T-cell (primary cell): ENCODE measurements at regions of chr4 and their contacts with region 1.

Region 1: DNA sequence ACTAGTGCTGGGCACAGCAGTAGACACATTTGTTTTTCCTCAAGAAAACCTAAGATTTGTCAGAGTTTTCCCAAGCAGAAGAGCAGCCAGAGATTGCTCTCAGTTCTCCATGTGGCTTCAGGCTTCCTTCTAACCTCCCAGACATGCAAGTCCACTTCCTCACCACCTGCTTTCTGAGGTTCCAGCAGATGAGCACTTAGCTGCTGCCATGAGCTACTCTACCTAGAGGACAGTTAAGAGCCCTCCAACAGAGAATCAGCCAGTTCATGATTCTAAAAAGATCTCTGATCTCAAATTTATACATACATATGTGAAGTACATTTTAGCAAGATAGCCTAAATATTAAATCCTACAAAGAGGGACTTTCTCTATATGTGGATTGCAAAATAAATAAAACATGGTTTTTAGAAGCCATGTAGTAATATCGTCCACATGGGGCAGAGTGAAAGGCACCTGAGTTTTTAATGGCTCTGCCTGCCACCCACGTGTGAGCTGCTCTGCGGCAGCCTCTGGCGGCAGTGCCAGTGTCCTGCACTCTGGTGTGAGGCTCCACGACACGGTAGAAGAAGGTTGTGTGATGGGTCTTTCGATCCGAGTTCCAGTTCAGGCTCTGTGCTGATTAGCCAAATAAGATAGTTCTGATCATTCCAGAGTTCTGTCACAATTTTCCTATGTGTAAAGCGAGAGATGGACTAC is 10.3 kb downstream of the CYP4V2 start:
- DNase-seq: peak; percentile 9 to 71 (median 47)
- ATAC-seq: peak; percentile 61 to 96 (median 91)
- H3K4me3 ChIP-seq: no peak overlapping the region
- H3K4me3 Mint-ChIP-seq: peak overlapping the region in 1 of 3 donors; percentile 17
- H3K27ac ChIP-seq: peak overlapping the region; percentile 52
- H3K27ac Mint-ChIP-seq: peak overlapping the region; percentile 70 to 74
- H3K4me1 ChIP-seq: no peaks in the 10 kb centered on the region
- H3K4me1 Mint-ChIP-seq: peaks cover 12 to 32% (median 18%) of the 10 kb centered on the region in 3 donors
- H3K27me3 ChIP-seq: no peaks in the 10 kb centered on the region
- H3K27me3 Mint-ChIP-seq: no peaks in the 10 kb centered on the region

Region 2: DNA sequence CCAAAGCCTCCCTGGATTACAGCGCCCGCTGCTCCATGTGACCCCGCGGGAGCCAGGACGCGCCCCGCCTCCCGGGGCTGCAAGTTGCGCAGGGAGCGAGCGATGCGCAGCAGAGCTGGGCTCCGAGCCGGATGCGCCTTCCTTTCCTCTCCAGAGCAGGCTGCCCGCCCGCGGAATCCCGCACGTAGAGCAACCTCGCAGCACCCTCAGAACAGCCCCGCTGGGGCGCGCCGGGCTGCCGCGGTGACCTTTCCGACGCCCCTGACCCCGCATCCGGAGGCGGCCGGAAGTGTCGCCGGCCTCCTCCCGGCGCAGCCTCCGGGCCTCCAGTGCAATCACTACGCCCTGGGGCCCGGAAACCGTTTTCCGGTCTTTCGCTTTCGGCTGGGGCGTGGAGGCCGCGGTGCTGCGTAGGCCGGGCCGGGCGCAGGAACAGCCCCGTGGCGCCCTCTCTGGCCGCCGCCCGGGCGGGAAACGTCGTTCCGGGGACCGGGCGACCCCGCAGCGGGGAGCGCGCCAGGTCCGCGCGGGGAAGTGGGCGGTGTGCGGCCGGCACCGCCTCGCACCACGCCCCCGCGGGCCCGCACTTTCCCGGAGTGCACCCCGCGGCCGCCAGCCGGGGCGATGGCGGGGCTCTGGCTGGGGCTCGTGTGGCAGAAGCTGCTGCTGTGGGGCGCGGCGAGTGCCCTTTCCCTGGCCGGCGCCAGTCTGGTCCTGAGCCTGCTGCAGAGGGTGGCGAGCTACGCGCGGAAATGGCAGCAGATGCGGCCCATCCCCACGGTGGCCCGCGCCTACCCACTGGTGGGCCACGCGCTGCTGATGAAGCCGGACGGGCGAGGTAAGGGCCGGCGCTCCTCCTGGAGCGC is 10.2 kb before region 1 on chr4 and contains the start of gene CYP4V2:
- CTCF ChIA-PET with region 1: interaction called, 7 to 19 read pairs
- POLR2A ChIA-PET with region 1: interaction called, 3 to 15 read pairs
- DNase-seq: peak; percentile 64 to 88 (median 79)
- ATAC-seq: peak; percentile 85 to 89 (median 86)
- H3K4me3 ChIP-seq: peak within 1 kb of the TSS; percentile 86 to 90
- H3K4me3 Mint-ChIP-seq: peak within 1 kb of the TSS; percentile 87 to 92 (median 89)
- H3K27ac ChIP-seq: peak within 1 kb of the TSS; percentile 94
- H3K27ac Mint-ChIP-seq: peak within 1 kb of the TSS; percentile 95 to 96
- H3K4me1 ChIP-seq: peaks cover 9 to 19% of the 10 kb centered on the region in 2 experiments
- H3K4me1 Mint-ChIP-seq: peaks cover 46 to 57% (median 48%) of the 10 kb centered on the region in 3 donors
- H3K27me3 ChIP-seq: no peaks in the 10 kb centered on the region
- H3K27me3 Mint-ChIP-seq: no peaks in the 10 kb centered on the region
- total RNA-seq, gene CYP4V2: 27.1 to 35.1 (median 30.0) TPM